ENCODE measurements at regions of chr15 and their contacts with region 1.

Region 1: DNA sequence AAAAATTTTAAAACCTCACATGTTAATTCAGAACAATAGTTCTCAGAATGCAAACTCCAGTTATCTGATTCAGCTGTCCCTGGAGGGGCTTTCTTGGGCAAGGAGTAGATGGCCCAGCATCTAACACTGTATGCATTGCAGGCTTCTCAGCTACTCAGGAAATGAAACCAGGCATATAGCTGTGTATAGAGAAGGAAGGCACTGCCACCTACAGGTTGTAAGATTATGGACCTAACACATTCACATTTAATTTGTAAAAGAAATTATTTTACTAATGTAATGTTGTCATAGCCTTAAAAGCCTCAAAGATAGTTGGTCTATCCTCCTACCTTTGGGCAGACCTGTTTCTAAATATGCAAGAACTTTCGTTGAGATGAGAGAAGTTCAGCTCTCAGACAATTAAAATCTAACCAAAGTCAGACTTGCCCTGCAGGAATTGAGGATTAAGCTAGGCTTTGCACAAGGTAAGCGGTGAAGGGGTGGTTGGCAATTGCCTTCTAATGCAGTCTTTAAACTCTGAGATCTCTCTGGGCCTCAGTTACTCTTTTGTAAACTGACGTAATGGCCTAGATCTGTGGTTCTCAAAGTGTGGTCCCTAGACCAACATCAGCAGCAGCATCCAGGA is 132.8 kb upstream of the SLC24A5 start:
- DNase-seq: peak; percentile 32
- H3K4me3 ChIP-seq: no peak overlapping the region
- H3K27ac ChIP-seq: no peak overlapping the region
- H3K4me1 ChIP-seq: no peaks in the 10 kb centered on the region
- H3K27me3 ChIP-seq: no peaks in the 10 kb centered on the region
- CTCF ChIP-seq: peak; percentile 56 to 69

Region 2: GRCh38 chr15:47374222-47374621 is 613.8 kb before region 1 on chr15:
- CTCF ChIA-PET with region 1: interaction called, 11 read pairs
- dilution Hi-C with region 1: no loop called
- in situ Hi-C with region 1: no loop called
- intact Hi-C with region 1: loop called (anchors 1 kb)
- DNase-seq: peak; percentile 23
- H3K4me3 ChIP-seq: no peak overlapping the region
- H3K27ac ChIP-seq: no peak overlapping the region
- H3K4me1 ChIP-seq: no peaks in the 10 kb centered on the region
- H3K27me3 ChIP-seq: no peaks in the 10 kb centered on the region
- CTCF ChIP-seq: peak; percentile 33 to 65

Region 3: GRCh38 chr15:47500823-47501222 is 487.2 kb before region 1 on chr15:
- CTCF ChIA-PET with region 1: no interaction called
- dilution Hi-C with region 1: no loop called
- in situ Hi-C with region 1: no loop called
- intact Hi-C with region 1: loop called (anchors 1 kb)
- DNase-seq: no peak
- H3K4me3 ChIP-seq: no peak overlapping the region
- H3K27ac ChIP-seq: no peak overlapping the region
- H3K4me1 ChIP-seq: no peaks in the 10 kb centered on the region
- H3K27me3 ChIP-seq: no peaks in the 10 kb centered on the region
- CTCF ChIP-seq: peak in 1 of 2 donors; percentile 7

Region 4: GRCh38 chr15:47717036-47717611 is 270.9 kb before region 1 on chr15 and contains the start of gene SEMA6D:
- CTCF ChIA-PET with region 1: interaction called, 5 read pairs
- dilution Hi-C with region 1: no loop called
- in situ Hi-C with region 1: loop called (anchors 25 kb)
- intact Hi-C with region 1: loop called (anchors 1 kb)
- DNase-seq: peak; percentile 57
- H3K4me3 ChIP-seq: peak within 1 kb of the TSS; percentile 34 to 56 (median 48)
- H3K27ac ChIP-seq: no peak within 1 kb of the TSS
- H3K4me1 ChIP-seq: peaks cover 12% of the 10 kb centered on the region
- H3K27me3 ChIP-seq: peaks cover 10% of the 10 kb centered on the region
- CTCF ChIP-seq: peak in 1 of 2 donors; percentile 22
- total RNA-seq, gene SEMA6D: under 0.01 to 0.35 TPM

Region 5: DNA sequence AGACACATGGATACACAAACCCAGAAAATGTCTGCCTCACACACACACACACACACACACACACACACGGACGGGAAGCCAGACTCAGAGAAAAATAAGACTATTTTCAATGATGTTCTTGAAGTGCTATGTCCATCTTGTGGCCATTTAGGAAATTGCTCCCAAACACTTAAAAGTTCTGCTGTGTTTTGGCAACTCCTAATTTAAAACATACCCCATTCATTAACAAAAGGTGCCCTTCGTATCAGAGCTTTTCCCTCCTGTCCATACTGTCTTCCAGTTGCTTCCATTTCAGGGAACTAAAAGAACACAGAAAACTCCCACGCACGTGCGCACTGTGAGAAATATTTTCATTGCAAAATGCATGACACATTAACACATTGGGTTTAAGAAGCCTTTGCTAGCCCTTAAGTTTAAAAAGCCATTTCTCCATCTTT is 262.6 kb after region 1 on chr15:
- CTCF ChIA-PET with region 1: no interaction called
- dilution Hi-C with region 1: no loop called
- in situ Hi-C with region 1: no loop called
- intact Hi-C with region 1: loop called (anchors 1 kb)
- DNase-seq: peak; percentile 67
- H3K4me3 ChIP-seq: no peak overlapping the region
- H3K27ac ChIP-seq: no peak overlapping the region
- H3K4me1 ChIP-seq: no peaks in the 10 kb centered on the region
- H3K27me3 ChIP-seq: peaks cover 5% of the 10 kb centered on the region
- CTCF ChIP-seq: peak; percentile 62 to 67

Region 6: DNA sequence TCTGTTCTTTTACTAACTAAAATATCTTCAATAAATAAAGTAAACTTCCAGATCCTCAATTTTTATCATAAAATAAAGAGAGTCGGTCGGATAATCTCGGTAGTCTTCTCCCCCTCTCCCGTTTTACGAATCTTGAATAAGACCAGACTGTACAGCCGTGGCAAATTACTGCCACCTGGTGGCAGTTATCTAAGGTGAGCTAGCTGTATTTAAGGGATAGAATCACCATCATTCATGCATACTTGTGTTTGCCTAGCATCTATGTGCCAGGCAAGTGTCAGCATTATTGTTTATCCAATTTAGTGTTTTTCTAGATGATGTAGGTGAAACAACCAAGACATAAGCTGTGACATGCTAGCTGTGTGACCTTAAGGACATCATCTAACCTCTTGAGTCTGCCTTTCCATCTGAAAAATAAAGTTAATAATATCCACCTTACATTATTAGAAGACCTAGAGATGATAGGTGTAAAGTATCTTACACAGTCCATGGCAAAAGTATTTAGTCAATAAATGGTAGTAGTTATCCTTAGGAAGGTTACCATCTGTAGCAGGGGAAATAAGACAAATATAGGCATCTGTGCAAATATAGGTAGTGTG is 364.6 kb after region 1 on chr15:
- CTCF ChIA-PET with region 1: interaction called, 5 read pairs
- dilution Hi-C with region 1: no loop called
- in situ Hi-C with region 1: no loop called
- intact Hi-C with region 1: loop called (anchors 5 kb)
- DNase-seq: peak; percentile 47
- H3K4me3 ChIP-seq: no peak overlapping the region
- H3K27ac ChIP-seq: no peak overlapping the region
- H3K4me1 ChIP-seq: no peaks in the 10 kb centered on the region
- H3K27me3 ChIP-seq: no peaks in the 10 kb centered on the region
- CTCF ChIP-seq: peak; percentile 78 to 84

Measured in mammary epithelial cell (primary cell).